ENCODE measurements at regions of chr6 and their contacts with region 1.

Region 1: GRCh38 chr6:11093589-11094410 is at the start of gene SMIM13:
- DNase-seq: peak; percentile 87 to 96 (median 95)
- ATAC-seq: peak; percentile 92
- H3K4me3 ChIP-seq: peak within 1 kb of the TSS; percentile 85 to 90
- H3K4me3 Mint-ChIP-seq: peak within 1 kb of the TSS; percentile 97
- H3K27ac ChIP-seq: peak within 1 kb of the TSS; percentile 81 to 92
- H3K27ac Mint-ChIP-seq: peak within 1 kb of the TSS; percentile 97
- H3K4me1 ChIP-seq: peaks cover 13% of the 10 kb centered on the region
- H3K4me1 Mint-ChIP-seq: peaks cover 30% of the 10 kb centered on the region
- H3K27me3 ChIP-seq: no peaks in the 10 kb centered on the region
- H3K27me3 Mint-ChIP-seq: no peaks in the 10 kb centered on the region
- CTCF ChIP-seq: peak; percentile 75
- total RNA-seq, gene SMIM13: 4.7 to 5.4 TPM

Region 2: DNA sequence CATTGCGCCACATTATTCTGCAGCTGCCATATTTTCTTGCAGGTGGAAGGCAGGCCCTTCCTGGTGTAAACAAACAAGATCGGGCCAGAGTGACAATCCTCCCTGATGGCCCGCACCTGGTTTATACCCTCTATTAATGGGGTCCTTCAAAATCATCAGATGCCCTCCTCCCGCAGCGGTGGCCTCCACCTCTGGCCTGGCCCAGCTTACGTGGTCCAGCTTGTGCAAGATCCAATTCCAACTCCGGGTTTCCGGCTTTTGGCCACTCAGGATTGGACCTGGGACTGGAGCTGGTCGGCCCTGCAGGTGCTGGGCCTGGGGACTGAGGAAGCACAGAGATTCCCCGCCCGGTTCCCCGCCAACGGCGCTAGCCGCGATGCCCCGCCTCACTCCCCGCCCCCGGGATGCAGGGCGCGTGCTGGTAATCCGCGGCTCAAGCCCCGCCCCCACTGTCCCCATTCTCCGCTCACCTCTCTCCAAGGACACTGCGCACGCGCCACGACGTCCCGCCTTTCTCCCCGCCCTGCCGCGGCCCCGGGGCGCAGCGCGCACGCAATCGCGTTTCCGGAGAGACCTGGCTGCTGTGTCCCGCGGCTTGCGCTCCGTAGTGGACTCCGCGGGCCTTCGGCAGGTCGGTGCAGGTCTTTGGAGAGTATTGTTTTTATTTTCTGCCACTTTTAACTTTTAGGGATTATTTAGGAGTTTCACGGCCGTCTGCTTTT is 346.4 kb before region 1 on chr6 and contains the start of gene TMEM14B:
- CTCF ChIA-PET with region 1: no interaction called
- POLR2A ChIA-PET with region 1: no interaction called
- intact Hi-C with region 1: loop called in 1 of 2 experiments (anchors 1 kb)
- DNase-seq: peak; percentile 98 to 100 (median 99)
- ATAC-seq: peak; percentile 98
- H3K4me3 ChIP-seq: peak within 1 kb of the TSS; percentile 73 to 79
- H3K4me3 Mint-ChIP-seq: peak within 1 kb of the TSS; percentile 96
- H3K27ac ChIP-seq: peak within 1 kb of the TSS; percentile 77 to 79
- H3K27ac Mint-ChIP-seq: peak within 1 kb of the TSS; percentile 97
- H3K4me1 ChIP-seq: peaks cover 33% of the 10 kb centered on the region
- H3K4me1 Mint-ChIP-seq: peaks cover 57% of the 10 kb centered on the region
- H3K27me3 ChIP-seq: no peaks in the 10 kb centered on the region
- H3K27me3 Mint-ChIP-seq: no peaks in the 10 kb centered on the region
- CTCF ChIP-seq: no peak
- total RNA-seq, gene TMEM14B: 36.5 to 41.2 TPM

Region 3: GRCh38 chr6:11144393-11144851 is 50.6 kb after region 1 on chr6:
- CTCF ChIA-PET with region 1: no interaction called
- POLR2A ChIA-PET with region 1: no interaction called
- intact Hi-C with region 1: loop called in 1 of 2 experiments (anchors 2 kb)
- DNase-seq: peak; percentile 42 to 82 (median 74)
- ATAC-seq: peak; percentile 77
- H3K4me3 ChIP-seq: no peak overlapping the region
- H3K4me3 Mint-ChIP-seq: no peak overlapping the region
- H3K27ac ChIP-seq: no peak overlapping the region
- H3K27ac Mint-ChIP-seq: no peak overlapping the region
- H3K4me1 ChIP-seq: no peaks in the 10 kb centered on the region
- H3K4me1 Mint-ChIP-seq: no peaks in the 10 kb centered on the region
- H3K27me3 ChIP-seq: no peaks in the 10 kb centered on the region
- H3K27me3 Mint-ChIP-seq: no peaks in the 10 kb centered on the region
- CTCF ChIP-seq: peak; percentile 92

Region 4: GRCh38 chr6:11232193-11232769 is 138.5 kb after region 1 on chr6 and contains the start of gene NEDD9:
- CTCF ChIA-PET with region 1: no interaction called
- POLR2A ChIA-PET with region 1: no interaction called
- intact Hi-C with region 1: loop called (anchors 1 to 2 kb)
- DNase-seq: peak; percentile 87 to 97 (median 91)
- ATAC-seq: peak; percentile 94
- H3K4me3 ChIP-seq: peak within 1 kb of the TSS; percentile 62 to 70
- H3K4me3 Mint-ChIP-seq: peak within 1 kb of the TSS; percentile 94
- H3K27ac ChIP-seq: peak within 1 kb of the TSS; percentile 76 to 96
- H3K27ac Mint-ChIP-seq: peak within 1 kb of the TSS; percentile 99
- H3K4me1 ChIP-seq: peaks cover 25% of the 10 kb centered on the region
- H3K4me1 Mint-ChIP-seq: peaks cover 61% of the 10 kb centered on the region
- H3K27me3 ChIP-seq: no peaks in the 10 kb centered on the region
- H3K27me3 Mint-ChIP-seq: no peaks in the 10 kb centered on the region
- CTCF ChIP-seq: no peak
- total RNA-seq, gene NEDD9: 41.2 to 44.2 TPM

Region 5: DNA sequence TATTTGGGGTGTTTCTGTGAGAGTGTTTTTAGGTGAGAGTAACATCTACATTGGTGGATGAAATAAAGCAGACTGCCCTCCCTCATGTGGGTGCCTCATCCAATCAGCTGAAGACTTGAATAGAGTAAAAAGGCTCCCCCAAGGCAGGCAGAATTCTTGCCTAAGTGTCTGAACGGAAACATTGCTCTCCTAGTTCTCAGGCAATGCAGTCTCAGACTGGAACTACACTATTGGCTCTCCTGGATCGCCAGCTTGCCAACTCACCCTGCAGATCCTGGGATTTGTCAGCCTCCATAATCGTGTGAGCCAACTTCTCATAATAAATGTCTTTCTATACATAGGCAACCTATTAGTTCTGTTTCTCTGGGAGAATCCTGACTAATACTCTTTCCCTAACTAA is 438.3 kb after region 1 on chr6:
- CTCF ChIA-PET with region 1: no interaction called
- POLR2A ChIA-PET with region 1: no interaction called
- intact Hi-C with region 1: loop called (anchors 1 to 2 kb)
- DNase-seq: no peak
- ATAC-seq: no peak
- H3K4me3 ChIP-seq: no peak overlapping the region
- H3K4me3 Mint-ChIP-seq: no peak overlapping the region
- H3K27ac ChIP-seq: no peak overlapping the region
- H3K27ac Mint-ChIP-seq: no peak overlapping the region
- H3K4me1 ChIP-seq: peaks cover 5% of the 10 kb centered on the region
- H3K4me1 Mint-ChIP-seq: peaks cover 4% of the 10 kb centered on the region
- H3K27me3 ChIP-seq: no peaks in the 10 kb centered on the region
- H3K27me3 Mint-ChIP-seq: peaks cover 21% of the 10 kb centered on the region
- CTCF ChIP-seq: no peak

Region 6: DNA sequence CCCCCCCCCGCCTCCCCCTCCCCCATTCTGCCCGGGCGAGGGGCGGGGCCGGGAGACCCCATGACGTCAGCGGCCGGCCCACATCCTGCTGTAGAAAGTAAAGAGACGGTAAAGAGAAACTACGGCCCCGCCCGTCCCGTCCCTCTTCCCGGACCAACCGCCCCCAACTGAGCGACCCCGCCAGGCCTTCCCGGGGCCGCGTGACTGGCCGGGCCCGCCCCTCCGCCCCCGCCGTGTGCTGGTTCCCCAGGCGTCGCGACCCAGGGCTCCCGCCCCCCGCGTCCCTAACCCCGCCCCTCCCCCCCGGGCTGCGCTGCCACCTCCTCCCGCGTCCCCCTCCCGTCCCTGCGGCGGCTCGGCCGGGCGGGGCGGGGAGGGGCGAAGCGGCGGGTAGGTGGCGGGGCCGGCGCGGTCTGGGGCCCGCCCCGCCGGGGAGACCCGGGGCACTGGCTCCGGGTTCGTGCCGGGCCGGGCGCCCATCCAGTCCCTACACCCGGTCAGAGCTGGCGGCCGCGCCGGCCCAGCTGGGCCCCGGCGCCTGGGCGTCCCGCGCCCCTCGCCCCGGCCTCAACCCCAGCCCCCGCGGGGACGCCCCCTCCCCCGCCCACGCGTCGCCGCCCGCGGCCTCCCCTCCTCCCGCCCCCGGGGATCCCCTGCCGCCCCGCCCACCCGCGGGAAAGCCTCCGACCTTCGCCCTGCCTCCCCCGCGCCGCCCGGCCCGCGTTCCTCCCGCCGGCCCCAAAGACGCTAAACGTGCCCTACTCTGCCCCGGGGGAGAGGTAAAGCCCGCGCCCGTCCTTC is 917.7 kb after region 1 on chr6:
- CTCF ChIA-PET with region 1: no interaction called
- POLR2A ChIA-PET with region 1: no interaction called
- intact Hi-C with region 1: loop called in 1 of 2 experiments (anchors 5 kb)
- DNase-seq: peak; percentile 92 to 99 (median 96)
- ATAC-seq: peak; percentile 71
- H3K4me3 ChIP-seq: peak overlapping the region in 1 of 2 experiments; percentile 73
- H3K4me3 Mint-ChIP-seq: peak overlapping the region; percentile 91
- H3K27ac ChIP-seq: peak overlapping the region in 1 of 2 experiments; percentile 93
- H3K27ac Mint-ChIP-seq: peak overlapping the region; percentile 94
- H3K4me1 ChIP-seq: peaks cover 28% of the 10 kb centered on the region
- H3K4me1 Mint-ChIP-seq: peaks cover 60% of the 10 kb centered on the region
- H3K27me3 ChIP-seq: no peaks in the 10 kb centered on the region
- H3K27me3 Mint-ChIP-seq: no peaks in the 10 kb centered on the region
- CTCF ChIP-seq: no peak